ENCODE measurements at regions of chr7 and their contacts with region 1.

Region 1: GRCh38 chr7:23863209-23863798 is 153.3 kb downstream of the STK31 start:
- DNase-seq: peak; percentile 32
- H3K4me3 ChIP-seq: no peak overlapping the region
- H3K27ac ChIP-seq: no peak overlapping the region
- H3K27me3 ChIP-seq: no peaks in the 10 kb centered on the region
- CTCF ChIP-seq: peak; percentile 86

Region 2: GRCh38 chr7:24381894-24382505 is 518.7 kb after region 1 on chr7:
- CTCF ChIA-PET with region 1: interaction called, 28 read pairs
- POLR2A ChIA-PET with region 1: no interaction called
- DNase-seq: no peak
- H3K4me3 ChIP-seq: no peak overlapping the region
- H3K27ac ChIP-seq: no peak overlapping the region
- H3K27me3 ChIP-seq: peaks cover 4% of the 10 kb centered on the region
- CTCF ChIP-seq: peak; percentile 41; the same call in 1 of the 2 replicates

Region 3: GRCh38 chr7:24665564-24666294 is 802.4 kb after region 1 on chr7:
- CTCF ChIA-PET with region 1: interaction called, 24 read pairs
- POLR2A ChIA-PET with region 1: no interaction called
- DNase-seq: peak; percentile 29
- H3K4me3 ChIP-seq: no peak overlapping the region
- H3K27ac ChIP-seq: no peak overlapping the region
- H3K27me3 ChIP-seq: no peaks in the 10 kb centered on the region
- CTCF ChIP-seq: peak; percentile 67

Measured in AG04450 (cell line).